Endothelial cell of umbilical vein (primary cell): ENCODE measurements at regions of chr15 and their contacts with region 1.

Region 1: DNA sequence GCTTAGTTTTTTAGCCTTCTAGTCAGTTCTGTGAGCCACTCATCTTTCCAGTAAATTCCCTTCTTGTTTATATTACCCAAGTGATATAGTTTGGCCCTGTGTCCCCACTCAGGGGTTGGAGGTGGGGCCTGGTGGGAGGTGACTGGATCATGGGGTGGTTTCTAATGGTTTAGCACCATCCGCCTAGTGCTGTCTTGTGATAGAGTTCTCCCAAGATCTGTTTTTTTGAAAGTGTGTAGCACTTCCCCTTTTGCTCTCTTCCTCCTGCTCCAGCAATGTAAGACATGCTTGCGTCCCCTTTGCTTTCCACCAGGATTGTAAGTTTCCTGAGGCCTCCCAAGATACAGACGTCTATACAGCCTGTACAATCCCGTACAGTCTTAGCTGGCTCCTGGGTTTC is 53.7 kb upstream of the INO80 start:
- DNase-seq: no peak
- H3K4me3 ChIP-seq: no peak overlapping the region
- H3K27ac ChIP-seq: no peak overlapping the region
- H3K4me1 ChIP-seq: no peaks in the 10 kb centered on the region
- H3K27me3 ChIP-seq: peaks cover 0 to 2% of the 10 kb centered on the region in 2 experiments
- CTCF ChIP-seq: no peak
- POLR2A ChIP-seq: no peak

Region 2: DNA sequence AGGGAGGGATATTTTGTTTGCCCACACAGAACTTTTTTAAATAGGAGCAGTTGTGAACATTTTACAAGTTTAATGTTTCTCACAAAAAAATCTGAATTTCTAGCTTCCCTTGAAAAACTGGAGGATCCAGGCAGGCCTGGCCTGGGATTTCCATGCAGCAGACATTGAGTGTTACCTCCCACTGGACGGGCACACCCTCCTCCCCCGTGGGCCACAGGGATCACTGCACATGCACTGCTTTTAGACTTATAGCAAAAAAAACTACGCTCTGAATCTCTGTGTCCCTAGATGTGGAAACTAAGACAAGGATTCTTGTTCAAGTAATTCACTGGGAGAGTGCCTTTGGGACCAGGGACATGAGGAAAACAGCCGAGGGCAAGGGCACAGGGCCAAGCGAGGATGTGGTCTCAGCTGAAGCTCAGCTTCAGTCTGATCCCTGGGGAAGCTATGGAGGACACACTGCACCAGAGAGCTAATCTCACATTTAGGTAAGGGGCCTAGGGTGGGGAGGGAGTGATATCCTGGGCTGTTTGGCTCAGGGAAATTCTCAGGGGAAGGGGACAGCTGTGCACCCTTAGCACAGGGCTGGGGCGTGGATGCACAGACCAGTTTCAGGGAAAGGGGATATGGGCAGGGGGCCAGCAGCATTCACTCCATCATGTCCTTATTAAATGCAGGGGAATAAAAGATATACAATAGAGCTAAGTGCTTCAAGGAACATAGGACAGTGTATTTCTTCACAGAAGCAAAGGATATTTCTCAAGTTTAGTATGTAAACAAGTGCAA is 1433.2 kb before region 1 on chr15:
- CTCF ChIA-PET with region 1: no interaction called
- POLR2A ChIA-PET with region 1: interaction called, 10 read pairs
- dilution Hi-C with region 1: no loop called
- intact Hi-C with region 1: no loop called
- DNase-seq: no peak
- H3K4me3 ChIP-seq: no peak overlapping the region
- H3K27ac ChIP-seq: no peak overlapping the region
- H3K4me1 ChIP-seq: no peaks in the 10 kb centered on the region
- H3K27me3 ChIP-seq: no peaks in the 10 kb centered on the region
- CTCF ChIP-seq: no peak
- POLR2A ChIP-seq: no peak

Region 3: DNA sequence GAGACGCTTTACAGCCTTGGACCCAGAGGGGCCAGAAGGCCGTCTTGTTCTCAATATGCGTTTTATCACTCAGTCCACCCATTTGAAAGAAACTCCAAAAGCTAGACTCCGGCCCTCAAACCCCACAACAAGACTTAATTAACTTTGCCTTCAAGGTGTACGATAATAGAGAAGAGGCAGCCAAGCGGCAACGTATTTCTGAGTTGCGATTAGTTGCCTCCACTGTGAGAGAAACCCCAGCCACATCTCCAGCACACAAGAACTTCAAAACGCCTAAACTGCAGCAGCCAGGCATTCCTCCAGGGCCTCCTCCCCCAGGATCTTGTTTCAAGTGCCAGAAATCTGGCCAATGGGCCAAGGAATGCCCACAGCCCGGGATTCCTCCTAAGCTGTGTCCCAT is 36.3 kb before region 1 on chr15:
- CTCF ChIA-PET with region 1: no interaction called
- POLR2A ChIA-PET with region 1: no interaction called
- dilution Hi-C with region 1: no loop called
- intact Hi-C with region 1: no loop called
- DNase-seq: no peak
- H3K4me3 ChIP-seq: no peak overlapping the region
- H3K27ac ChIP-seq: no peak overlapping the region
- H3K4me1 ChIP-seq: no peaks in the 10 kb centered on the region
- H3K27me3 ChIP-seq: peaks cover 0 to 3% of the 10 kb centered on the region in 2 experiments
- CTCF ChIP-seq: no peak
- POLR2A ChIP-seq: no peak

Region 4: GRCh38 chr15:41154412-41154811 is 15.4 kb before region 1 on chr15:
- CTCF ChIA-PET with region 1: no interaction called
- POLR2A ChIA-PET with region 1: no interaction called
- dilution Hi-C with region 1: no loop called
- intact Hi-C with region 1: no loop called
- DNase-seq: no peak
- H3K4me3 ChIP-seq: no peak overlapping the region
- H3K27ac ChIP-seq: no peak overlapping the region
- H3K4me1 ChIP-seq: no peaks in the 10 kb centered on the region
- H3K27me3 ChIP-seq: no peaks in the 10 kb centered on the region
- CTCF ChIP-seq: no peak
- POLR2A ChIP-seq: no peak